Activated CD4-positive, alpha-beta T cell treated with anti-CD3 and anti-CD28 coated beads, Interleukin-2, amount 10 ng/mL, durations not matched to agents 24 days and 14 days (primary cell): ENCODE measurements at regions of chr2 and their contacts with region 1.

Region 1: DNA sequence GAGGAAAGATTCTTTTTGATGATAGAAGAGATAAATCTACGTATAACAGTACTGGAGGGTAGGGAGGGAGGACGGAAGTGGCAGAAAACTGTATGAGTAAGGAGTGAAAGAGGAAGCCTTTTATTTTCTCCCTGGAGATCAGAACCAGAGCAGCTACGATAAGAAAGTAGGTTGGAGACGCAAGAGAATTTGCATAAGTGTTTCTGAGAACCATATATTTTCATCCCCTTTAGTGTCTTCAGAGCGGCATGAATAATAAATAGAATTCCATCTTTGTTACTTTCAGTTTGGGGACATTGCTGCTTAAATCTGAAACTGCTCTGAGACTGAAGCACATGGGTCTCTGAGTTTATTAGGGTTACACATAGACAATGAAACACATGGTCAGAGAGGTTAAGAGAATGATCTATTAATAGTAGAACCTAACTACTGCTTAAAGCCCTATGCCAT is 230.2 kb upstream of the TNP1 start:
- DNase-seq: peak; percentile 67
- H3K4me3 Mint-ChIP-seq: peak overlapping the region; percentile 54
- H3K27ac Mint-ChIP-seq: peak overlapping the region; percentile 74
- H3K4me1 Mint-ChIP-seq: peaks cover 43% of the 10 kb centered on the region
- H3K27me3 Mint-ChIP-seq: no peaks in the 10 kb centered on the region

Region 2: DNA sequence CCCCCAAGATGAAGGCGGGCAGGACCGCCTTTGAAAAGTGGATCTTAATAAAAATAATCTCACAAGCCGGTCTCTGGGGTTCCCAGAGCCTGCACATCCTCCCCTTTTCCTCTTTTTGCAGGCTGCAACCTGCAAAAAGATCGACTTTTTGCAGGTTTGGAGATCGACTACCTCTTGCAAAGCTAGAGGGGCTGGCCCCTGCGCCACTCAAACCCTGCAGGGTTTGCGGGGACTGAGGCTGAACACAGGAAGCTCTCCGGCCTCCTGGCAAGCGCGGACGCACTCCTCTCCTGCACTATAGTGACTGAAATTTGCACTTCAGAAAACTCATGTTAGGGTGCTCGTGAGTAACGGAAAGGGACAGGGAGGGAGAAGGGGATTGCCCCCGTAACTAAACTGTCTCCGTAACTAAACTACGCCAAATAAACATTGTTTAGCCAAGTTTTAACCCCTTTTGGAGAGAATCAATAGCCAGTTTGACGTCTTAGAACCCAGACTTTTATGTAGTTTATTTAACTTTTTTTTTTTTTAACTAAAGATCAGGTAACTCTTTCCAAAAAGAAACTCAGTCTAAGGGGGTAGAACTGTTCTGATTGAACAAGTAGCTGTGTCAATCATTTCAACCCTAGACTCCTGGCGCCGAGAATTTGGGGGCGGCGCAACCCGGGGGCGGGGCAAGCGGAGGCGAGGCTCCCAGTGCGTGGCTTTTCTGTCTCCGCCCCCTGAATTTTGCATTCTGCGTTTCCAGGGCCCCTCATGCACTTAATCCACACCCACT is 397.2 kb before region 1 on chr2:
- intact Hi-C with region 1: loop called (anchors 2 kb)
- DNase-seq: peak; percentile 93
- H3K4me3 Mint-ChIP-seq: peak overlapping the region; percentile 89
- H3K27ac Mint-ChIP-seq: peak overlapping the region; percentile 75
- H3K4me1 Mint-ChIP-seq: peaks cover 21% of the 10 kb centered on the region
- H3K27me3 Mint-ChIP-seq: peaks cover 65% of the 10 kb centered on the region

Region 3: DNA sequence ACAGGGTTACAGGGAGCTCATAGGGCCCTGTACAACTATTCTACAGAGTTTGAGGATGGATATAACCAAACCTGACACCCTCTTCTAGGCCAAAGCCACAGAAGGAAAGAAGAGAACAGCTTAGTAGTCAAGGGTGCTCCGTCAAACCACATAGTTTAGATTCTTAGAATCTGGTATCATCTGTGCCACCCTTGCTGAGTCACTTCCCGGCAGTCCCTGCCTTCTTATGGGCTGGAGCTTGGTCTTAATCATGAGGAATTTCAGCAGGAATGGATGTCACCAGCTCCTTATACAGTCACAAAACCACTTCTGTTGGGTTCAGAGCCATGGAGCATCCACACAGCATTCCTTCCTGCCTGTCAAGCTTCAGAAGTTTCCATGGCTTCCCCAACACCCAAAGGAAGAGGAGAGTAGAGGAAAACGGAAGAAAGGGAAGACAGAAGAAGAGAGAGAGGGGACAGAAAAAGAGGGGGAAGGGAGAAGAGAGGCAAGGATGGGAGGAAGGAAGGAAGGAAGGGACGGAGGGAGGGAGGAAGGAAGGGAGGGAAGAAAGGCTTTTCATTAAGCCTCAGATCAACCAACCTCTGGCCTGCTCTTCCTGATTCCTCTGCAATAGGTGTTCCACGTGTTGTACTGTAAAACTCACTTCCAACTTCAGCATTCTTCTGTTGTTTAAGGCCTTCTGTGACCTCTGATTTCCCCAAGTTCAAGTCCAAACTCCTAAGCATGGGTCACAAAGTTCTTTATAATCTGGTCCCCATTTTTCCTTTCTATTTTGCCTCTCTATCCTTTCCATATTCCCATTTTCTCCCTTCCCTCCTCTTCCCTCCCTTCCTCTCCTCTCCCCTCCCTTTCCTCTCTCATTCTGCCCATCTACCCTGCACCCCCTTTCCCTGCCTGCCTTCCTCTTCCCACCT is 15.9 kb after region 1 on chr2:
- intact Hi-C with region 1: loop called (anchors 2 kb)
- DNase-seq: peak; percentile 63
- H3K4me3 Mint-ChIP-seq: no peak overlapping the region
- H3K27ac Mint-ChIP-seq: peak overlapping the region; percentile 55
- H3K4me1 Mint-ChIP-seq: peaks cover 23% of the 10 kb centered on the region
- H3K27me3 Mint-ChIP-seq: peaks cover 17% of the 10 kb centered on the region

Region 4: DNA sequence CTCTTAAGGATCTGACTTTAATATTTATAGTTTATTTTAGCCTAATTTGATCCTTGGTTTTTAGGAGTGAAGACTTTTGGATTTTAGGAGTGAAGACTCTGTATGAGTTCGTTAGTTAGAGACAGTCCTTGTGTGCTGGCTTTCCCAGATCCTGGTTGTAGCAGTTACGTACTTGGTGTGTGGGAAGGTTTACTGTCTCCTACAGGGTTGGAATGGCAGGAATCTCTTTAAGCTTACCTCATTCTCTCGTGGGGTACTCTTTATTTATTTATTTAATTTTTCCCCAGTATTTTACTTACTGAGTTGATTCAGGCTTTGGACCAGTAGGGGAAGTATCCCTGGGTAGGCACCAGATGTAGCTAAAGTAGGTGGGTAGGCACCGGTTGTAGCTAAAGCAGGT is 1033.9 kb after region 1 on chr2:
- intact Hi-C with region 1: no loop called
- DNase-seq: no peak
- H3K4me3 Mint-ChIP-seq: no peak overlapping the region
- H3K27ac Mint-ChIP-seq: no peak overlapping the region
- H3K4me1 Mint-ChIP-seq: peaks cover 7% of the 10 kb centered on the region
- H3K27me3 Mint-ChIP-seq: peaks cover 4% of the 10 kb centered on the region